GM12878 (cell line): ENCODE measurements at regions of chr20 and their contacts with region 1.

Region 1: DNA sequence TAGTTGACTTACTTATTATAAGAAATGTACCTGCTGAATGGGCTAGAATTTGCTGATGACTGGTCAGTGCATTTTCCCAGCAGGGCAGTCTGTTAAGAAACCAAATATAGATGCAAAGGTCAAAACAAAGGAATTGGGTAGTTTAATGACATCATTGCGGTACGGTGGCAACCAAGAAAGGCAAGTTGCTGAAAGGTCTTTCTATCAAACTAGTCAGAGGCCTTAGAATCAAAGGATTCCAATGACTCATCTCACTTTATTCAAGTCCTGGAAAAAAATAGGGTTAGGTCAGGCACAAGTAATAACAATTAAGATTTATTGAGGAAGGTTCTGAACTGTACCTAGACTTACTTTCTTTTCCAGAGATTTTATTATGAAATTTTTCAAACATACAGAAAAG is 76.4 kb downstream of the KIZ start:
- DNase-seq: no peak
- ATAC-seq: no peak
- H3K4me3 ChIP-seq: no peak overlapping the region
- H3K27ac ChIP-seq: no peak overlapping the region
- H3K4me1 ChIP-seq: no peaks in the 10 kb centered on the region
- H3K27me3 ChIP-seq: no peaks in the 10 kb centered on the region
- CTCF ChIP-seq: no peak
- EP300 ChIP-seq: no peak
- POLR2A ChIP-seq: no peak
- RAD21 ChIP-seq: no peak

Region 2: GRCh38 chr20:21147593-21147992 is 54.7 kb before region 1 on chr20:
- CTCF ChIA-PET with region 1: no interaction called
- POLR2A ChIA-PET with region 1: no interaction called
- RAD21 ChIA-PET with region 1: no interaction called
- SMC1A ChIA-PET with region 1: no interaction called
- in situ Hi-C with region 1: loop called (anchors 10 kb)
- intact Hi-C with region 1: no loop called
- DNase-seq: no peak
- ATAC-seq: no peak
- H3K4me3 ChIP-seq: no peak overlapping the region
- H3K27ac ChIP-seq: no peak overlapping the region
- H3K4me1 ChIP-seq: no peaks in the 10 kb centered on the region
- H3K27me3 ChIP-seq: no peaks in the 10 kb centered on the region
- CTCF ChIP-seq: no peak
- EP300 ChIP-seq: no peak
- POLR2A ChIP-seq: no peak
- RAD21 ChIP-seq: no peak

Region 3: GRCh38 chr20:21159658-21160380 is 42.5 kb before region 1 on chr20:
- CTCF ChIA-PET with region 1: no interaction called
- POLR2A ChIA-PET with region 1: no interaction called
- RAD21 ChIA-PET with region 1: no interaction called
- SMC1A ChIA-PET with region 1: no interaction called
- in situ Hi-C with region 1: loop called (anchors 5 kb)
- intact Hi-C with region 1: no loop called
- DNase-seq: no peak
- ATAC-seq: no peak
- H3K4me3 ChIP-seq: no peak overlapping the region
- H3K27ac ChIP-seq: no peak overlapping the region
- H3K4me1 ChIP-seq: peaks cover 2% of the 10 kb centered on the region; the same call in 1 of the 2 replicates
- H3K27me3 ChIP-seq: no peaks in the 10 kb centered on the region
- CTCF ChIP-seq: no peak
- EP300 ChIP-seq: no peak
- POLR2A ChIP-seq: no peak
- RAD21 ChIP-seq: no peak

Region 4: GRCh38 chr20:21219686-21220085 is 17.4 kb after region 1 on chr20:
- CTCF ChIA-PET with region 1: no interaction called
- POLR2A ChIA-PET with region 1: no interaction called
- RAD21 ChIA-PET with region 1: no interaction called
- SMC1A ChIA-PET with region 1: no interaction called
- in situ Hi-C with region 1: no loop called
- intact Hi-C with region 1: no loop called
- DNase-seq: no peak
- ATAC-seq: no peak
- H3K4me3 ChIP-seq: no peak overlapping the region
- H3K27ac ChIP-seq: no peak overlapping the region
- H3K4me1 ChIP-seq: no peaks in the 10 kb centered on the region
- H3K27me3 ChIP-seq: no peaks in the 10 kb centered on the region
- CTCF ChIP-seq: no peak
- EP300 ChIP-seq: no peak
- POLR2A ChIP-seq: no peak
- RAD21 ChIP-seq: no peak